CD8-positive, alpha-beta T cell (primary cell): ENCODE measurements at regions of chr1 and their contacts with region 1.

Region 1: GRCh38 chr1:194795917-194796593 is 1609.6 kb upstream of the B3GALT2 start:
- DNase-seq: no peak
- ATAC-seq: no peak
- H3K4me3 ChIP-seq: no peak overlapping the region
- H3K4me3 Mint-ChIP-seq: no peak overlapping the region
- H3K27ac ChIP-seq: no peak overlapping the region
- H3K27ac Mint-ChIP-seq: no peak overlapping the region
- H3K4me1 ChIP-seq: no peaks in the 10 kb centered on the region
- H3K4me1 Mint-ChIP-seq: no peaks in the 10 kb centered on the region
- H3K27me3 ChIP-seq: no peaks in the 10 kb centered on the region
- H3K27me3 Mint-ChIP-seq: no peaks in the 10 kb centered on the region
- CTCF ChIP-seq: no peak

Region 2: DNA sequence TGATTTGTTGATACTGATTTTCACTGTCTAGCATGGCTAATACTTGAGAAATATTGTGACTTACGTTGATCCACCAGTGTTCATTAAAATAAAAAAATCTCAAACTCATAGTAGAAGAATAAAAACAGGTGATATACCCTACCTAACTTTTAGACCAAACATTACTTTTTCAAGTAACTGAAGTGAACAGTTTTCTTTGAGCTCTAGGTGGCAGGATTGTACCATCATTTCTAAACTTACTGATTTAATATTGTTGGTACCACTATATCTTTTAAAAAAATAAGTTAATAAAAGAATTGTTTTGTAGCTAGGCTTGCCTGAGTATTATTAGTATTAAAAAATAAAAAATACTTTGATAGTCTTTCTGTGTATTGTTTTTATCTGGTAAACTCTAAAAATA is 1652.8 kb before region 1 on chr1:
- CTCF ChIA-PET with region 1: no interaction called
- POLR2A ChIA-PET with region 1: no interaction called
- intact Hi-C with region 1: loop called in 1 of 2 experiments (anchors 5 kb)
- DNase-seq: peak in 1 of 9 experiments; percentile 28
- ATAC-seq: no peak
- H3K4me3 ChIP-seq: no peak overlapping the region
- H3K4me3 Mint-ChIP-seq: no peak overlapping the region
- H3K27ac ChIP-seq: no peak overlapping the region
- H3K27ac Mint-ChIP-seq: no peak overlapping the region
- H3K4me1 ChIP-seq: no peaks in the 10 kb centered on the region
- H3K4me1 Mint-ChIP-seq: peaks cover 17% of the 10 kb centered on the region
- H3K27me3 ChIP-seq: no peaks in the 10 kb centered on the region
- H3K27me3 Mint-ChIP-seq: no peaks in the 10 kb centered on the region
- CTCF ChIP-seq: peak; percentile 23